Activated CD4-positive, alpha-beta T cell treated with anti-CD3 and anti-CD28 coated beads for 36 hours (primary cell): ENCODE measurements at regions of chr3 and their contacts with region 1.

Region 1: DNA sequence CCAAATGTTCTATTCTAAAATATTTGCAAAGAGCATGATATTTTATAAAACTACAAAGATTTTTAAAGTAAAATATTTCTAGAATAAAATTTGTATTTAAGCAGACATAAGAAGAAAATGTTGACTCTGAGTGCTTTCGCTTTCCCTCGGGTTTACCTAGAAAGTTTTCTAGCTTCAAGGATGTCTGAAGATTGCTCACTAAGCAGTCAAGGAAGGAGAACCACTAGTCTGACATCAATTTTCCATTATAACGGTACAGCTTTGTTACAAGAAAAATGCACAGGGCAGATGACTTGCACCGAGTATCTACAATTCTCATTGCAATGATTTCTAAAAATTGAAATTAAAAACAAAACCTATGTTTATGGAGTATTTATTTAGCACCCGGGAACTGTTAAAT is 14.2 kb downstream of the GPR15 start:
- DNase-seq: no peak
- ATAC-seq: peak; percentile 94
- H3K4me3 Mint-ChIP-seq: peak overlapping the region; percentile 41
- H3K27ac Mint-ChIP-seq: peak overlapping the region; percentile 87
- H3K4me1 Mint-ChIP-seq: peaks cover 41% of the 10 kb centered on the region
- H3K27me3 Mint-ChIP-seq: no peaks in the 10 kb centered on the region

Region 2: GRCh38 chr3:98556164-98557130 is 10.5 kb after region 1 on chr3:
- CTCF ChIA-PET with region 1: interaction called, 7 read pairs
- POLR2A ChIA-PET with region 1: interaction called, 7 read pairs
- intact Hi-C with region 1: loop called (anchors 1 kb)
- DNase-seq: peak; percentile 86
- ATAC-seq: peak; percentile 78
- H3K4me3 Mint-ChIP-seq: peak overlapping the region; percentile 67
- H3K27ac Mint-ChIP-seq: peak overlapping the region; percentile 94
- H3K4me1 Mint-ChIP-seq: peaks cover 83% of the 10 kb centered on the region
- H3K27me3 Mint-ChIP-seq: no peaks in the 10 kb centered on the region

Region 3: GRCh38 chr3:98623572-98624280 is 77.8 kb after region 1 on chr3:
- CTCF ChIA-PET with region 1: no interaction called
- POLR2A ChIA-PET with region 1: no interaction called
- intact Hi-C with region 1: no loop called
- DNase-seq: no peak
- ATAC-seq: no peak
- H3K4me3 Mint-ChIP-seq: no peak overlapping the region
- H3K27ac Mint-ChIP-seq: no peak overlapping the region
- H3K4me1 Mint-ChIP-seq: no peaks in the 10 kb centered on the region
- H3K27me3 Mint-ChIP-seq: no peaks in the 10 kb centered on the region